ENCODE measurements at regions of chr2 and their contacts with region 1.

Region 1: DNA sequence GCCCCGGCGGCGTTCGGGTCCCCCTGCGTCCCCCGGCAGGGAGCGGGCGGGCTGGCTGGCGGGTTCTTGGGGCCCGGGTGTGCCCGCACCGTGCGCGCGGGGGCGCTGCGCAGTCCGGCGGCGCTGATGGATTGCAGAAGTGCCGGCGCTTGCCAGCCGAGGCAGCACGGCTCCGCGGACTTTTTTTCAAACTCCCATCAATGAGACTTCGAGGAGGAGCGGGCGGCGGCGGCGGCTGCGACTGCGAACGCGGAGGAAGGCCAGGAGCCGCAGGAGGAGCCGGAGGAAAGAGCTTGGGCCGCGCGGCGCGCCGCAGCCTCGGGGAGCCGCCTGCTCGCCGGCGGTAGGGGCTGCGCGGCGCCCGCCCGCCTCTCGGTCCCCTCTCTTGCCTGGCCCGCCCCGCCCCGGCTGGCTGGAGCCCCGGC is at the start of gene GLI2:
- DNase-seq: peak; percentile 85
- ATAC-seq: peak; percentile 87
- total RNA-seq, gene GLI2: 2.2 TPM

Region 2: DNA sequence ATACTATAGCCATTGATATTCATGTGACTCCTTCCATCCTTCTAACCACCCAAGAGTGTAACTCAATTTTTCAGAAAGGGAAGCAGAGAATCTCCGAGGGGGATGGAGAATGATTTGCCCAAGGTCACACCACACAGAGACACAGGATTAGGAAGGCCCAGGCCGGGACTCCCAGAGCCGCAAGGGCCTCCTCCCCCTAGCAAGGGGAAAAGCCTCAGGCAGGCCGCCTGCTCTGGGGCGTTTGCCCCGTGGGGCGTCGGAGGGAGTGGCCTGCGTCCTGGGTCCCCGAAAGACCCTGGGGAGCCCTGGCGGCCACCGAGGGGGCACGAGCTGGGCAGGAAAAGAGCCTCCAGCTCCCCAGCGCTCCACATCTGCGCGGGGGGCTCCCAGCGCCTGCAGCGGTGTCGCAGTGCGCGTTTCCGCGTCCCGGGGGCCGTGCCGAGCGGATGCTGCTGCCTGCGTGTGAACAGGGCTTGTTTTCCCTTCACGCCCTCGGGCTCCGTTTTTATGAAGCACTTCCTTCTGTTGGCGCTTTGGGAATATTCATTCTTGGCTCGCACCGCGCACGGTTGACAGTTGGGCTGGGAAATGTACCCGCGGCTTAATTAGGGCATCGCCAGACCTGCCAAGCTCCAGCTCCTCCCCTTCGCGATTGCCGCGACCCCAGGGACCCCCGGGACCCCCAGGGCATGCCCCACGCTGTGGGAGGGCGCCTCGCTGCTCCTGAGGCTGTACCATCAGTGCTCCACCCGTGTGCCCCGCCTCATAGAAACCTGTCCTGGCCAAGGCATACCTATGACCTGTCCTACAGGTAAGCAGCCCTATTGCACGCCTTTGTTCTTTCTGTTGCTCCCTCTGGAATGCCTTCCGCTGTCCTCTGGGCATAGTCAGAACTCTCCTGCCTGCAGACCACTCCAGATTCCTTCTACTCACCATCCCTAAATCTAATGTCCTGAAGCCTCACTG is 159.0 kb before region 1 on chr2:
- intact Hi-C with region 1: no loop called
- DNase-seq: peak; percentile 79
- ATAC-seq: peak; percentile 51

Region 3: GRCh38 chr2:120675460-120676130 is 60.2 kb before region 1 on chr2:
- intact Hi-C with region 1: no loop called
- DNase-seq: no peak
- ATAC-seq: peak; percentile 54

Region 4: GRCh38 chr2:120825370-120826259 is 89.9 kb after region 1 on chr2:
- intact Hi-C with region 1: loop called (anchors 10 kb)
- DNase-seq: peak; percentile 89
- ATAC-seq: peak; percentile 80

Region 5: DNA sequence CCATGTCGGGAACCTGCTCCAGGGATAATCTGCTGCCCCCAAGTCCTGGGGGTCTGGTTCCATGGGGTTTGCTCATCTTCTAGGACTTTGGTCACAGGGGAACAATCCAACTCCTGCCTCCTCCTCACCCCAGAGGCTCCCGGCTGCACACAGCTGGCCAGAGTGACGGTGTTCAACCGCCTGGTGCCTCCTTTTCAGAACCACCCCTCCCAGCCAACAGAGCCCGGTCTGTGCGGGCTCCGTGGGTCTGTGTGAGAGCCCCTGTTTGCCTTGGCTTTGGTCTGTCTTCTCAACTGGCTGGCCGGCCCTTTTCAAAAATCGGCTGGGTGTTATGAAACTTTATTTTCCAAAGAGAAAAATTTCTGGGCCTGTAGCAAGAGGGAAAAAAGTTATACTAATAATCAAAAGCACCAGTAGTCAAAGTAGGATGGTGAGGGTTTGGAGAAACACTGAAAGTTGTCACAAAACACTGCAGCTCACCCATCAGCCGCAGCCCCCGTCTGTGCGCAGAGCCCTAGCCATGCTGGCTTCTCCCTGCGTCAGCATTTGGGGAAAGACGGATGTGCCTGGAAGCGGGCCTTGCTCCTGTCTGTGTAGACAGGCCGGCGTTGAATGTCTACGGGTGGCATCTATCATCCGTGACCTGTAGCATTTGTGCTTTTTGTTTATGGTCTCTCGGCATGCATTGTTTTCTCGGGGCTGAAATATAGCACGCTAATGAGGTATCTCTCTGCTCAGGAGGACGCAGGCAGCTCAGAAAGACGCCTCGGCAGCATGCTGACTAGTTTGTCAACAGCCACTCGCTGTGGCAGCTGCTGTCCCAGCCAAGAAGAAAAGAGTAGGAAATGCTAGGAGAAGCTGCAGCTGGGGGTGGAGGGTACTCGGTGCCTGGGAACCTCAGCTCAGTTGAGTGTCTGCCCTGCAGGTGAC is 138.5 kb after region 1 on chr2:
- intact Hi-C with region 1: loop called (anchors 5 kb)
- DNase-seq: peak; percentile 44
- ATAC-seq: peak; percentile 62

Region 6: DNA sequence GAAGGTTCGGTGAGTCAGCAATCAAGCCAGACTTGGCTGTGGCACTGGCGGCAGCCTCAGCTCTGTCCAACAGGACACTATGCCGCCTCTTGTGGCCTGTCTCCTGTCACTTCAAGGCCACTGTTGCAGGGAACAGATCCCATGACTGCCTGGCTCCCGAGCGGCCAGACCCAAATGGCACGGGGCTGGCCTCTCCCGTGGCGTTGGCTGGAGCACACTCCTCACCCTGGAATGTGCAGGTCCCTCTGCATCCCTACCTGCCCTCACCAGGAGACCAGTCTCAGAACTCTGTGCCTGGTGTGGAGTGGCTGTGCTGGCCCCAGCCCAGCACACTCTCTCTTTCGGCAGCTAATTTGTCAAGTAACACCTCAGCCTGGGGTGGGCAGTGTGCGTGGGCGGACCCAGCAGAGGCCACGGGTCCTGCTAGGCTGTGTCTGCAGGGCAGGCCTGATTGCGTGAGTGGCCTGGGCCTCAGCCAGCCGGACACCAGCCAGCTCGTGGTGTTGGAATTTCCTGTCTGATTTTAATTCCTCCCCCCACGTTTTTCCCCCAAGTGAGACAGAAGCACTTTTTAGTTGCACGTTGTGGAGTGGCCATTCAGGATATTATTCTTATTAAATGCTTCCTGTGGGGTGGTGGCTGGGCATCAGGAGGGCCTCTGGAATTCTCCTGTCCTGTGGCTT is 179.2 kb after region 1 on chr2:
- intact Hi-C with region 1: loop called (anchors 10 kb)
- DNase-seq: peak; percentile 91
- ATAC-seq: peak; percentile 82

Region 7: GRCh38 chr2:121071034-121071504 is 335.3 kb after region 1 on chr2:
- intact Hi-C with region 1: loop called (anchors 1 kb)
- DNase-seq: no peak
- ATAC-seq: peak; percentile 69